ENCODE measurements at regions of chr1 and their contacts with region 1.

Region 1: GRCh38 chr1:41360993-41361753 is at the start of gene FOXO6:
- DNase-seq: peak; percentile 97 to 100
- H3K4me3 ChIP-seq: peak within 1 kb of the TSS; percentile 73 to 87
- H3K27ac ChIP-seq: peak within 1 kb of the TSS; percentile 19 to 58
- H3K4me1 ChIP-seq: peaks cover 12 to 37% of the 10 kb centered on the region in 2 donors
- H3K27me3 ChIP-seq: no peaks in the 10 kb centered on the region
- CTCF ChIP-seq: peak; percentile 16 to 65 (median 45)
- total RNA-seq, gene FOXO6: 5.7 TPM

Region 2: GRCh38 chr1:40161125-40161887 is 1199.9 kb before region 1 on chr1 and contains the start of gene RLF:
- intact Hi-C with region 1: loop called (anchors 10 kb)
- DNase-seq: peak; percentile 72 to 97
- H3K4me3 ChIP-seq: peak within 1 kb of the TSS; percentile 84 to 94
- H3K27ac ChIP-seq: peak within 1 kb of the TSS; percentile 91 to 95
- H3K4me1 ChIP-seq: peaks cover 7 to 8% of the 10 kb centered on the region in 2 donors
- H3K27me3 ChIP-seq: no peaks in the 10 kb centered on the region
- CTCF ChIP-seq: peak in 1 of 3 experiments; percentile 16
- total RNA-seq, gene RLF: 7.1 TPM

Region 3: DNA sequence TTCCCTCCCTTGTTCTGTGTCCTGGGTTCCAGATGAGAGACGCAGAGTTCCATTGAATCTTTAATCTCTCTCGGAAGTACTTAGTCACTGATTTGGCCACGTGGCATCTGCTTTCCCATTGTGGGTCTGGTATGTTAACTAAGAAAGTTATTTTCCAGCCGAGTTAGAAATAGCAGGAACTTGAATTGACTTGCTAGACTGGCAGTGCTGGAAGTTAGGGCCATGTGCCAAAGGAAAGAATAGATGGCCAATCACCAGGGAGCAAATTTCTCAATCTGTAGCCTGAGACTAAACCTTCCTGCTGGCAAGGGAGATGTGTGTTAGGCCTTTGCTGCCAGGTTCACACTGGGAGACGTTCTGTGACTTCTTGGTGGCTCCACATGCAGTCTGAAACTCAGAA is 315.4 kb before region 1 on chr1:
- intact Hi-C with region 1: loop called (anchors 10 kb)
- DNase-seq: peak; percentile 57 to 94
- H3K4me3 ChIP-seq: no peak overlapping the region
- H3K27ac ChIP-seq: peak overlapping the region; percentile 76 to 88
- H3K4me1 ChIP-seq: peaks cover 6 to 35% of the 10 kb centered on the region in 2 donors
- H3K27me3 ChIP-seq: no peaks in the 10 kb centered on the region
- CTCF ChIP-seq: no peak

Region 4: DNA sequence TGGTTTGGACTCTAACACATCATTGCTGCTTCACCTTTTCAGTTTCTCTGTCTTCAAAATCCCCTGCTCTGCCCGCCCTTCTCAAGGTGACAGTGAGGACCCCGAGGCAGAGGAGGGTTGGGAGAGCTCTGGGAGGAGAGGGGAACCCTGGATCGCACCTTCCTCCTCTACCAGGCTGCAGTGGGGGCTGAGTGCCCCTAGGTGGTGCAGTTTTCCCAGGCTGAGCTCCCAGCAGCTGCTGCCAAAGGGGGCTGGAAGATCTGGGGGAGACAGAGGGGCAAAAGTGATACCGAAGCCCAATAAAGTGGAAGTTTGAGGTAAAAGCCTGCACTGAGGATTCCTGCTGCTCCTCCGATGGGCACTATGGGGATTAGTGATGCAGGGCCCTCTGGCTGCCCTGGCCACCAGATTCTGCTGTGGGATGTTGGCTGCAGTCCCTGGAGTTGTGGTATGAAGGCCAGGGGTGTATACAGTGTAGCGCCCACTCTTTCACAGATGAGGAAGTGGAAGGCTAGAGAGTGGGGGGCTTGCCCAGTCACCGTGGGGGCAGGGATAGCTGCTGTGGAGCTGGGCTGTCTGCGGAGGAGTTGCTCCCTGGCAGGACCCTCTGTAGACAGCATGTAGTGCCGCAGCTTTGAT is 78.4 kb before region 1 on chr1:
- intact Hi-C with region 1: loop called (anchors 5 kb)
- DNase-seq: no peak
- H3K4me3 ChIP-seq: no peak overlapping the region
- H3K27ac ChIP-seq: no peak overlapping the region
- H3K4me1 ChIP-seq: peaks cover 0 to 2% of the 10 kb centered on the region in 2 donors
- H3K27me3 ChIP-seq: no peaks in the 10 kb centered on the region
- CTCF ChIP-seq: peak; percentile 64 to 82 (median 81)

Region 5: DNA sequence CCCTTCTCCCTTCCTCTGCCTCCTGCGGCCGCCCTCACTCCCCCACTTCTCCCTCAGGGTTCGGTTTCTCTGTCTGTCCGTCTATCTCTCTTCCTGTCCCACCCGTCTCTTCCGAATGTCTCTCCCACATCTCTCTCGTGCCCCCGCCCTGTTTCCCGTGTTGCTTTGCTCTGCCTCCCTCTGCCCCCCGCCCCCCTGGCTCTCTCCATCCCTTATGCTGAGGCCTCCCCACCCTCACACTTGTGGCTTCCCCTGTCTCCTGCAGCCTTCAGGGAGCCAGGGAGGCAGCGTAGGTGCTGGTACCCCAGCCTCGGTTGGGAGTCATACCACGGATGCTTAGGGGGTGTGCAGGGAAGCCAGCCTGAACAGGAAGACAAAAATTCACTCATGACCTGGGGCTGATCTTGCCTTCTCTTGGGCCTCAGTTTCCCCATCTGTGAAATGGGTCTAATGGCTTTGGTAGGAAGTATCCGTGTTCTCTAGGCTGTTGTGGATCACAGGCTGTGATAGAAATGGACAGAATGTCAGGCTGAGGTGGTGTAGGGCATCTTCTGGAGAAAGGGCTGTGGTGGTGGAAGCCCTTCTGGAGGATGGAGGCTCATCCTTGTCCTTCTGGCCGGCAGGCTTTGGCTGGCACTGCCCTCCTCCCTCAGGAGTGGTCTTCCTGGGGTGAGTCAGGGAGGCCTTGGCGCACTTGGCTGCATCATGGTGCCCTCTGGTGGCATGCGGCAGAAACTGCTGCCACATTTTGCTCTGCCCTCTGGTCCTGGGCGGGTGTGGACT is 55.6 kb after region 1 on chr1:
- intact Hi-C with region 1: loop called (anchors 1 kb)
- DNase-seq: peak in 1 of 2 donors; percentile 85
- H3K4me3 ChIP-seq: no peak overlapping the region
- H3K27ac ChIP-seq: peak overlapping the region in 1 of 2 donors; percentile 88
- H3K4me1 ChIP-seq: peaks cover 4 to 12% of the 10 kb centered on the region in 2 donors
- H3K27me3 ChIP-seq: no peaks in the 10 kb centered on the region
- CTCF ChIP-seq: peak; percentile 90 to 97 (median 93)

Region 6: DNA sequence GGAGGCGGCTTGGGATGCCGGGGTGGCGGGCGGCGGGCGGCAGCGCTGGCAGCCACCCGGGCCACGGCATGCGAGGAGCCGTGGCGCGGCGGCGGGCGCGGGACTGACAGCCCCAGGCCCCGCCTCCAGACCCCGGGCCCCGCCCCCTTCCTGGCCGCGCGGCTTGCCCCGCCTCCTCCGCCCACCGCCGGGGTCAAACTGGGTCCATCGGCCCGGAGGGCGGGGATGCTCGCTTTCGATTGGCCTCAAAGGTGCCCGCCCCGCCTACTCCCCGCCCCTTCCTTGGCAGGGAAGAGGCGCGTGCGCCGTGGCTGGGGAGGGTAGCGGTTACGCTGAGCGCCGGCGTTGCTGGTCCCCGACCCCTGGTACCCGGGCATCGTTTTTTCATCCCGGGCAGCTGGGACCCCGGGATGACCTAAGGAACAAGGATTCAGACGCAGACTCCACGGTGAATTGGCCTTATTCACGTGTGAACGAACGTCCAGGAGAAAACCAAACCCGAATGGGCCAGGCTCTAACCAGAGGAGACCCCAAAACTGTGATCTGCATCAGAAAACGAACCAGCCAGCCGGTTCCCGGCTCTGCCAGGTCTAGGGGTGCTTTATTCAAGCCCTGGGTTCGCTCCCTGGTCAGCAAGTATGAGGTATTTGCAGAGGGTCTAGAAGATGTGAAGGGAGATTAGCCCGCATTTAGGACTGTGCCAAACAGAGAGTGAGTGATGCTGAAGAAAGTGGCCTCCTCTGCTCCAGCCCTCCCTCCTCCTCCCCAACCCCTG is 674.8 kb after region 1 on chr1:
- intact Hi-C with region 1: loop called (anchors 10 kb)
- DNase-seq: peak; percentile 81 to 98
- H3K4me3 ChIP-seq: peak overlapping the region; percentile 91 to 99
- H3K27ac ChIP-seq: peak overlapping the region; percentile 31 to 84
- H3K4me1 ChIP-seq: peaks cover 6 to 7% of the 10 kb centered on the region in 2 donors
- H3K27me3 ChIP-seq: no peaks in the 10 kb centered on the region
- CTCF ChIP-seq: no peak